HepG2 (cell line): ENCODE measurements at regions of chr11 and their contacts with region 1.

Region 1: DNA sequence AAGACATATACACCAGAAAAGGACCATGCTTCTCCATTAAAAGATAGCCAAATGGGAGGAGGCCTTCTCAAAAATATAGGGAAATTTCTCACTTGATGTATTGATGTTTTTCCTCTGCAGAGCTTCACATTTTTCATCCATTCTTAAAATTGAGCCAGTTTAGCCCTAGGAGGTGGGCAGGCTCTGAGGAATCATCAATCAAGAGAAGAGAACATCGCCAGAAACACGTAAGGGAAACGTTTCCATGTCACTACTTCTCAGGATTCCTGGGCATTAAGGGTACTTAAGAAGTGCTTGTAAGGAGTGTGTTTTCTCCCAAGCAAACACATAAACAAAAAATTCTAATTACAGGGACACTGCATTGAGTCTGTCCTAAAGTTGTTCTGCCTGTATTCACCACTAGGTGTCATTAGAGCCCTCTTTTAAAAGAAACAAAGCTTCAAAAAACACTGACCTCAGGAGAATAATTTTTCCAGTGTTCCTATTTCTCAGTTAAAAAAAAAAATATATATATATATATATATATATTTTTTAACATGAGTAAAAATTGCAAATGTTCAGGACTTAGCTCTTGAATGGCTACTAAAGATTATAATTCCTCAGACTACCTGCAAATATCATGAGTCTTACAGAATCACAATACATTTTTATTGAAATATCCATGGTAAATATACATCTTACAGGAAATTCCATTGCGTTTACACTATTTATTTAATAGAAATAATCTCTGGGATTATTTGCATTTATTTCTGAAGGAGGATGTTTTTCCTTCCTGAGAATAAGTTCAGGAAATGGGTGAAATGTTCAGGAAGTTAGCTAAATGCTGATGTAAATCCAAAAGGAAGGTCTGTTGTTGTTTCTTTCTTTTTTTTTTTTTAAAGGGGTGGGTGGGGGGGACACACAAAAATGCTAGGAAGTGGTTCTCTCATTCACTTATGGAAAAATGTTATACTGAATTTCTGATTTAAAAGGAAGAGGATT is 16.0 kb downstream of the FZD4 start:
- DNase-seq: peak; percentile 65
- ATAC-seq: no peak
- H3K4me3 ChIP-seq: peak overlapping the region; percentile 56 to 71 (median 67); a peak in 4 of 6 replicates
- H3K27ac ChIP-seq: peak overlapping the region; percentile 94
- H3K4me1 ChIP-seq: peaks cover 52% of the 10 kb centered on the region
- H3K27me3 ChIP-seq: no peaks in the 10 kb centered on the region; a peak in 1 of 5 replicates
- CTCF ChIP-seq: peak; percentile 62
- EP300 ChIP-seq: no peak
- POLR2A ChIP-seq: no peak
- RAD21 ChIP-seq: peak; percentile 43; the same call in 1 of the 2 replicates

Region 2: GRCh38 chr11:86888164-86889000 is 50.8 kb before region 1 on chr11:
- CTCF ChIA-PET with region 1: no interaction called
- POLR2A ChIA-PET with region 1: no interaction called
- in situ Hi-C with region 1: no loop called
- intact Hi-C with region 1: no loop called
- DNase-seq: no peak
- ATAC-seq: no peak
- H3K4me3 ChIP-seq: no peak overlapping the region
- H3K27ac ChIP-seq: no peak overlapping the region
- H3K4me1 ChIP-seq: peaks cover 10% of the 10 kb centered on the region; the same call in 1 of the 2 replicates
- H3K27me3 ChIP-seq: peaks cover 0 to 17% of the 10 kb centered on the region in 2 experiments; a peak in 3 of 5 replicates
- CTCF ChIP-seq: no peak
- EP300 ChIP-seq: no peak
- POLR2A ChIP-seq: no peak
- RAD21 ChIP-seq: no peak

Region 3: DNA sequence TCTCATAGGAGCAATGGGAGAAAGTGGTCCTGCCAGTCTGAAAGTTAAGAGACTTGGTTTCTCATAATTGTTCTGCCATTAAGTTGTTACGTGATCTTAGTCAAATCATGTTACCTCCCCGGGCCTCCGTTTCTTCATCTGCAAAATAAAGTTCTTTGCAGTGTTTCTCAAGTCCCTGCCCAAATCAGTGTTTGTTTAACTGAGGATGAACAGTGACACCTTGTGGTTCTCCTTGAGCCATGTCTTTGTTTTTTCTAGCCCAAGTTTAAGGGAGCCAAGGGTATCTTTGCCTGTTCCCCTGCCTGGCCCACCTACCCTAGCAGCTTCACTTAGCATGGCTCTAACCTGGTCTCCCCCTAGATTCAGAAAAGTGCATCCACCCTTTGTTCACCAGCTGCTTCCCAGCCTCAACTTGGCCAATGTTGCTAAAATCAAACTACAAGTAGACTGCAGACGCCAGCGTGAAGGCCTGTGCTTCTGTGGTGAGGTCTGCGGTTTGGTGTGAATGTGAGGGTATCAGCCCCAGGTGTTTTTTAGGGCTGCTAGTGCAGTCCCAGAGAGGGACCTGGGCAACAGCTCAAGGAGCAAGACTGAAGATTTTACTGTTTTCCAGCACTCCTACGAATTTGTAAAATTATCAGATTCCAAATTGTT is 19.5 kb before region 1 on chr11:
- CTCF ChIA-PET with region 1: no interaction called
- POLR2A ChIA-PET with region 1: interaction called, 12 read pairs
- in situ Hi-C with region 1: no loop called
- intact Hi-C with region 1: no loop called
- DNase-seq: peak; percentile 43
- ATAC-seq: peak; percentile 37; the same call in 1 of the 3 replicates
- H3K4me3 ChIP-seq: no peak overlapping the region
- H3K27ac ChIP-seq: no peak overlapping the region
- H3K4me1 ChIP-seq: peaks cover 16% of the 10 kb centered on the region
- H3K27me3 ChIP-seq: no peaks in the 10 kb centered on the region
- CTCF ChIP-seq: peak; percentile 68
- EP300 ChIP-seq: no peak
- POLR2A ChIP-seq: no peak
- RAD21 ChIP-seq: no peak

Region 4: DNA sequence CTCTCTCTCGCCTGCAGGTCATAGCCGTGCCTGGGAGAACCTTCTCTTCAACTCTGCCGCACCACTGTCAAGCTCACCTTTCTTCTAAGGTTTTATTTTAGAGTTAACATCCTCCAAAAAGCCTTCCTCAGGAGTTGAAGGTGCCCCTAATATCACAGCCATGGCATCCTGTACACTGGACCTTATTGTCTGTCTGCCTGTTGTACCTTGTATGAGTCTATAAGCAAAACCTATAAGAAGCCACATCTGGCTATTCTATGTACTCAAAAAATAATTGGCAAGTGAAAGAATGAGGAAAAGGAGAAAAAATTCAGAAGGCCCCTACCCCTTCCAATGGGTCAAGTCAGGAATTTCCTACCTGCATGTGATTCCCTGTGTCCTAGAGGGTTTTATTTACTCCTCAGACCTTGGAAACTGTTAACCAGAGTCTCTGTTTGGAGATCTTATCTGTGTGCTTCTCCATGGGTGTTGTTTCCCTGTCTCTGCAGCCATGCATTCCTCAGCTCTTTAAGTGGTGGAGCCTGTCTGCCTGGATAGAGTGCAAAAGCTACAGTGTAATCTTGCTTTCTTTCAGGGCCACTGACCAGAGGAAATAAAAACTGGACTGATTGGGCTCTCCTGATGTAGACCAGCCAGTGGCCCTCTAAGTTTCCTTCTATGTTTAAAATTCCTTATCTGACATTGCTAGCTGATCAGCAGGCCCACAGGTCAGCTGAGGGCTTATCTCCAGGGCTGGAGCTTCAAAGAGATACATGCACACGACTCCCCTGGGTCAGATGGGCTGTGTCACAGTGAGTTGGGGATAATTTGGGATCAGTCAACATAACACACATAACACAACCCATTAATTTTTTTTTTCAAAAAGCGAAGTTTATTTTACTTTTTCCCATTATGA is 60.9 kb after region 1 on chr11:
- CTCF ChIA-PET with region 1: interaction called, 3 read pairs
- POLR2A ChIA-PET with region 1: interaction called, 37 read pairs
- in situ Hi-C with region 1: no loop called
- intact Hi-C with region 1: loop called (anchors 1 kb)
- DNase-seq: peak; percentile 99
- ATAC-seq: peak; percentile 92
- H3K4me3 ChIP-seq: peak overlapping the region; percentile 31 to 48 (median 34)
- H3K27ac ChIP-seq: peak overlapping the region; percentile 87
- H3K4me1 ChIP-seq: peaks cover 91% of the 10 kb centered on the region
- H3K27me3 ChIP-seq: no peaks in the 10 kb centered on the region
- CTCF ChIP-seq: no peak
- EP300 ChIP-seq: peak; percentile 47 to 80; a peak in 2 of 4 replicates
- POLR2A ChIP-seq: peak in 1 of 2 experiments; percentile 42; a peak in 1 of 4 replicates
- RAD21 ChIP-seq: no peak

Region 5: DNA sequence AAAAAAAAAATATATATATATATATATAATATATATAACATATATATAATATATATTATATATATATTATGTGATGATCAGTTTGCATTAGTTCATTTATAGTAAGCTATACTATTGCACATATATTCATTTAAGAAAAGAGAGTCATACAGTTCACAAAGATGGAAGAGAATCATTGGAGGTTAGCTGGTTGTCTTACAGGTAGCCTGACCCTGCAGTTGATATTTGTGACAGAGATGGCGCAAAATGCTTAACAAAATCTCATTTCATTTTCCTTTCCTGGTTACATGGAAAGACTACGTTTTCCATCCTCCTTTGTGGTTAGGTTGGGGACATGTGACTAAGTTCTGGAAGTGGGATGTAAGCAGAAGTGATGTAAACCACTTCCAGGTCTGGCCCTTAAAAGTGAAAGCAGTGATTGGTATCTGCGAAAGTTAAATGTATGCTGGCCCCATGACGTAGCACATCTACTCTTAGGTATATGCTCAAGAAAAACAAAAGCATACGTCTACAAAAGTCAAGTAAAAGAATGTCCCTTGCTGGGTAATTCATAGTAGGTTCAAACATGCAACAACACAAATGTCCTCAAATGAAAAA is 91.4 kb after region 1 on chr11:
- CTCF ChIA-PET with region 1: no interaction called
- POLR2A ChIA-PET with region 1: interaction called, 53 read pairs
- in situ Hi-C with region 1: no loop called
- intact Hi-C with region 1: loop called (anchors 2 kb)
- DNase-seq: peak; percentile 29
- ATAC-seq: no peak
- H3K4me3 ChIP-seq: no peak overlapping the region
- H3K27ac ChIP-seq: no peak overlapping the region
- H3K4me1 ChIP-seq: peaks cover 53% of the 10 kb centered on the region
- H3K27me3 ChIP-seq: no peaks in the 10 kb centered on the region
- CTCF ChIP-seq: no peak
- EP300 ChIP-seq: no peak
- POLR2A ChIP-seq: no peak
- RAD21 ChIP-seq: no peak

Region 6: DNA sequence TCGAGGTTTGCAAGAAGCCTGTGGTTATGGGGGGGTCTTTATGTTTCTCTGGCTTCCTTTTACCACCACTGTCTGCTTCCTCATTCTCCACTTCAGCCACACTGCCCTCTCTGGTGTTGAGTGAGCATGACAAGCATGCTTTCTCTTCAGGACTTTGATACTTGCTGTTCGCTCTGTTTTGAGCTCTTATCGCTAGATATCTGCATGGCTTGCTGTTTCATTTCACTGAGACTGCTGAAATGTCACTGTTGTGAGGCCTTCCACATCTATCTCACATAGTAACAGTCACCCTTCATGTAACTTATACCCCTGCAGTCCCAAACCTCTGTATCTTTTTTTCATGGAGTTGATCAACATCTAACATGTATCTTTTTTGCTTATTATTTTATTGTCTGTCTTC is 158.4 kb after region 1 on chr11:
- CTCF ChIA-PET with region 1: interaction called, 7 read pairs
- POLR2A ChIA-PET with region 1: interaction called, 7 read pairs
- in situ Hi-C with region 1: no loop called
- intact Hi-C with region 1: loop called (anchors 5 kb)
- DNase-seq: peak; percentile 87
- ATAC-seq: peak; percentile 99
- H3K4me3 ChIP-seq: no peak overlapping the region
- H3K27ac ChIP-seq: peak overlapping the region; percentile 52
- H3K4me1 ChIP-seq: peaks cover 13% of the 10 kb centered on the region
- H3K27me3 ChIP-seq: no peaks in the 10 kb centered on the region; a peak in 1 of 5 replicates
- CTCF ChIP-seq: peak; percentile 85
- EP300 ChIP-seq: no peak
- POLR2A ChIP-seq: no peak
- RAD21 ChIP-seq: 0 out of 2 replicates have a peak, but pooled peaks have one; percentile 28

Region 7: GRCh38 chr11:87299041-87299481 is 359.9 kb after region 1 on chr11:
- CTCF ChIA-PET with region 1: no interaction called
- POLR2A ChIA-PET with region 1: no interaction called
- in situ Hi-C with region 1: loop called (anchors 5 kb)
- intact Hi-C with region 1: no loop called
- DNase-seq: no peak
- ATAC-seq: no peak
- H3K4me3 ChIP-seq: no peak overlapping the region
- H3K27ac ChIP-seq: no peak overlapping the region
- H3K4me1 ChIP-seq: no peaks in the 10 kb centered on the region
- H3K27me3 ChIP-seq: no peaks in the 10 kb centered on the region
- CTCF ChIP-seq: no peak
- EP300 ChIP-seq: no peak
- POLR2A ChIP-seq: no peak
- RAD21 ChIP-seq: no peak